ENCODE measurements at regions of chr10 and their contacts with region 1.

Region 1: DNA sequence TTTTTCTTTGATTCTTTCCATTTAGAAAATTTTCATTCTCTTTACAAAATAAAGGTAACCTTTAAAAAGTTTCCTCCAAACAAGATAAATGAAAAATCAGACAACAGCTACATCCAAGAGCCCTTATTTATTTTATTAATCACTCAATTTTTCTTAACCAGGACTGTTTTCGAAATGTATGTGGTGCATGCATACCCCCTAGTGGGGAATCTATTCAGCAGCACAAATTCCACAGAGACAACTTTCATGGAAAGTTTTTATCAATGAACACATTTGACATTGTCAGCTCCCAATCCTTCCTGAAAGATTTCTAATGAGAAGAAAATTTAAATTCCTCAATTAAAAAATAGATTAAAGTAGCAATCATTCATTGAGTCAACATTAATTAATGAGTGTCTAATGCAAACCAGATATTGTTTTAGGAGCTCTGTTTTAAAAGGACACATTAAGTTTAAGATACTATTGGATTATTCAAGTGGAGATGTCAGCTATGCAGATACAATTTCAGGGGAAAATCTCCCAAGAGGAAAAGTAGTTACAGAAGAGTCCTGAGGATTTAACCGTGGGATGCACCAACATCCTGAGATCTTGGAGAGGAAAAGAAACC is 5.2 kb upstream of the HTR7 start:
- DNase-seq: no peak
- H3K4me3 ChIP-seq: no peak overlapping the region
- H3K27ac ChIP-seq: no peak overlapping the region
- H3K4me1 ChIP-seq: peaks cover 0 to 4% (median 0%) of the 10 kb centered on the region in 4 donors
- H3K27me3 ChIP-seq: no peaks in the 10 kb centered on the region
- CTCF ChIP-seq: peak; percentile 54 to 59

Region 2: DNA sequence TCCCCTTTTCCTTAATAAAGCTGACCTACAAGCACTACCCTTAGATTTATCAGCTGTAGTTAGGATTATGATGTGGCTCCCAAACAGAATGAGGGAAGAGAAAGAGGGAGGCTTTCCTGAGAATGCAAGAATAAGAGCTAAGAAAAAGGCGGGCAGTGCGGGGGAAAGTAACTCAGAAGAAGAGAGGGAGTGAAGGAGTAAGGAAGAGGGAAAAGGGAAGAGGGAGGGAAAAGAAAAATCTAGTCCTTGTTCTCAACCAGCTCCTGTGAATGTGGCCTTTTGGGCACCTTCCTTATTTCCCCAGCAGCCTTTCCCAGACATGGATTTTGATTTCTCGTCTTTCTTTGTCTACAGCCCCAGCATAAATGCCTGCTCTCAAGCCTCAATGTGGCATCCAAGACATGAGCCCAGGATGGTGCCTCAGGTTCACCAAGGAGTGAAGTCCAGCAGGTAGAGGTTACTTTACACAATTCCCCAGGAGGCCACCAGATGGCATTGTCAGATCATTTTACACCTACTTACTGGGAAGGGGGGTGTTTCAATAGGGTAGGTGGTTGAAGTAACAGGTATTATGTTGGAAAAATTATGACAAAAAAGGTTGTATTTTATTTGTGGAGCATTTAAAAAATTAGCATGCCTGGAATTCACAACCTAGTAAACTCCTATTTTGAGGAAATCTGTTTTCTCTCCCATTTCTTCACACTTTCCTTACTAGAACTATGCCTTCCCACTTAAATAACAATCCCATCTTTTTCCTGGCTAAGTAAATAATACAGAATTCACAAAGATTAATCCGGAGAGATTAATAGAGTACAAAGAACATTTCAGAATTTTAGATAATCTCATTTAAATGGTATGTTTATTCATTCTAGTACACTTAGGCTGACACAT is 111.7 kb before region 1 on chr10:
- intact Hi-C with region 1: loop called (anchors 5 kb)
- DNase-seq: peak in 1 of 2 donors; percentile 38
- H3K4me3 ChIP-seq: no peak overlapping the region
- H3K27ac ChIP-seq: no peak overlapping the region
- H3K4me1 ChIP-seq: no peaks in the 10 kb centered on the region
- H3K27me3 ChIP-seq: peaks cover 0 to 2% of the 10 kb centered on the region in 2 donors
- CTCF ChIP-seq: peak; percentile 57 to 60